Left ventricle myocardium superior (tissue), 1 donor: ENCODE measurements at regions of chr6 and their contacts with region 1.

Region 1: DNA sequence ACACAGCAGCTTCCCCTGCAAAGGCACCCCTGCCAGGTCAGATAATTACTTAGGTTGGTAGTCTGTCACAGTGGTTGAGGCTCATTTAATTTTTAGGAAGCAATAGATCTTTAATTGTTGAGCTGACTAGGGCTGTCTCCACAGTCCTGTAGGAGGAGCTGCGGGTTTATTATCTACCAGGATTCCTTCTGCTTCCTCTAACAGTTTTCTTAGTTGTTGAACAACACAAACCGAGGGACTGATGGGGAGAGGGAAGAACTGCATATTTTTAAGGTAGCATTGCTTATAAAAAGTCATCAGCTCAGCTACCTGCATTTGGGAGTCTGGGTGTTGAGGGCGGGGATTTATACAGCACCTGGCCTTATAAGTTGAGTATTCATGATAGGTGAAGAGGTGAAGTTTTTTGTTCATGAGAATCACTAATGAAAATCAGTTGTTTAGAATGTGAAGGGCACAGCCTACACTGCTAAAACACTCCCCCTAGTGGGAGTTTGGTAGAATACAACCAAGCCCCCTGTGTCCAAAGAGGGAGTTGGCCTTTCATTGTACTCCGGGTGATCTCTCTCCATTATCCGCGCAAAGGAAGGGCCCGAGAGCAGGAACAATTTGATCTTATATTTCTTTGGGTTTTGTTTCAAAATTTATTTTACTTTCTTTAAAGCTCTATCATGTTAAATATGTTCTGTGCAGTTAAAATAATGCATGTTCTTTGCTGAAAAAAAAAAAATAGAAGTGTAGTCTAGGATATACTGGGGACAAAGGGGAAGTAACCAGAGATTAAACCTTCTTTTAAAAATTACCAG is 69.6 kb downstream of the SSR1 start:
- DNase-seq: no peak
- ATAC-seq: peak; percentile 63

Region 2: GRCh38 chr6:6676910-6677441 is 566.4 kb before region 1 on chr6:
- intact Hi-C with region 1: loop called (anchors 10 kb)
- DNase-seq: peak; percentile 71
- ATAC-seq: peak; percentile 85

Region 3: GRCh38 chr6:6724539-6725467 is 518.6 kb before region 1 on chr6:
- intact Hi-C with region 1: loop called (anchors 5 kb)
- DNase-seq: peak; percentile 81
- ATAC-seq: peak; percentile 92

Region 4: GRCh38 chr6:7389451-7390225 is 146.3 kb after region 1 on chr6 and contains the starts of genes CAGE1 and RIOK1:
- intact Hi-C with region 1: no loop called
- DNase-seq: peak; percentile 98
- ATAC-seq: peak; percentile 100
- total RNA-seq, gene CAGE1: not detected
- total RNA-seq, gene RIOK1: 10.8 TPM